ENCODE measurements at regions of chr2 and their contacts with region 1.

Region 1: DNA sequence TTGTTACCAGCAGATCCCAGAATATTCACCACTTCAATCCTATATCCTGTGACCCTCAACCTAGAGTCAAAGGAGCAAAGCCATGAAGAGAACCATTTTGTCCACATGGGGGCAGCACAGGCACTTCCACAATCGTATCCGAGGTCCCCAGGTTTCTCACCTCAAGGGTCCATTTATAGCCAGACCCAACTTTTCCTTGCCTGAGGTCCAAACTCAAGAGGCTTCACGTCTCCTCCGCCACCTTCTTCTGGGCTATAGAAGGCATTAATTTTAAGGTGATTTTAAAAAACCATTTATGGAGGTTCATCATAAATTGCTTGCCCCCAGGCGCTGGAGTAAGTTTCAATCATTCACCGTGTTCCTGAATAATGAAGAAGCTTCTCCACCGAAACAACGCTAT is 111.6 kb upstream of the NABP1 start:
- DNase-seq: peak in 5 of 10 donors; percentile 12 to 62 (median 49)
- H3K4me3 ChIP-seq: no peak overlapping the region
- H3K27ac ChIP-seq: no peak overlapping the region
- H3K27me3 ChIP-seq: no peaks in the 10 kb centered on the region
- CTCF ChIP-seq: peak; percentile 32 to 80 (median 68)

Region 2: DNA sequence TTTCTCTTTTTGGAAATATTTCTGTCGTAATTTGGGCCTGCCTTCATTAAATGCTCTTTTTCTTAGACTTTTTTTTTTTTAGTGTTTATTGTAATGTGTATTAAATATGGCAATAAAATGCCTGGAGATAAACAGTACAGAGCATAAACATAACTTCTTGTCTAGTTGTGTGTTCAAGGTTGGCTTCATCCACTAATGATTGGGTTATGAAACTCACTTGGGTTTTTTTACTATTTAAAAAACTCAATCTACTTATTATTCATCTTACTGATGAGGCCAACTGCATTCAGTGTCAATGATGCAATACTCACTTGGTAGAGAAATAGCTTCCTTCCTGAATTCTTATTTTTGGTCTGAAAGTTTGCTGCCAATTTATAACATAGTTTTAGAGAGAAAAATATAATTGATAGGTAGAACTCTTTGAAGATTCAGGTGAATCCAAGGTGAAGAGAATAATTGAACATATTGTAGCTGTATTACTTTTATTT is 32.6 kb before region 1 on chr2:
- intact Hi-C with region 1: no loop called
- DNase-seq: no peak
- H3K4me3 ChIP-seq: no peak overlapping the region
- H3K27ac ChIP-seq: no peak overlapping the region
- H3K27me3 ChIP-seq: peaks cover 0 to 5% (median 0%) of the 10 kb centered on the region in 45 donors
- CTCF ChIP-seq: no peak

Region 3: DNA sequence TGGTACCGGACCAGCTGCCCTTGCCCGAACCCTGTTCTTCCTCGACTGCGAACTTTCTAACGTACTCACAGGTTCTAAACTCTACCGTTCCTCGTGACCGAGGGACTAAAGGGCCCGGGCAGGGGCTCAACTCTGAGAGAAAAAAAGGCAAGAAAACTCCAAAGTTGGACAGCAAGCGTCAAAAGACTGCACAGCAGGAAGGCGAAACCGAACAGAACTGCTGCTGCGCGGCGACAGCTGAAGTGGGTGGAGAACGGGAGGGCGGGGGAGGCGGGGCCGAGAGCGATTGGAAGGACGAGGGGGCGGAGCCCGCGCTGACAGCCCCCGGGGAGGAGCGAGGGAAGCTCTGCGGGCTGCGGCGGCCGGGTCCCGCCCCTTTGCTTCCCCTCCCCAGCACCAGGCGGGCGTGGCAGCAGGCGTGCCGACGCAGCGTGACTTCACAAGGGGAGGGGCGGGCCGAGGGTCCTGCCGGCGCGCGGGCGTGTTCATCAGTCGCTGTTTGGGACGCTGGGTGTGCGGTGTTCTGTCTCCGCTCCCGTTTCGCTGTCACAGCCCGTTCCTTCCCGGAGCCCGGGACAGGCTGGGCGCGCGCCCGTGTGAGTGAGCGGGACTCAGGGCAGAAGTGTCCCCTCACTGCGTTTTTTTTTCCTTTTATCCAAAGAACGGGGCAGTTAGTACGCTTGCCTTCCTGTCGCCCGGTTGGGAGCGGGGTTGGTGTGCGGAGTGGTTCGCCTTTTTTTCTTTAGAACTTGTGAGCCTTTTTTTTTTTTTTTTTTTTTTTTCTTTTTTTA is 111.5 kb after region 1 on chr2 and contains the start of gene NABP1:
- intact Hi-C with region 1: loop called in 1 of 2 experiments (anchors 10 kb)
- DNase-seq: peak; percentile 86 to 98 (median 96)
- H3K4me3 ChIP-seq: peak within 1 kb of the TSS; percentile 51 to 96 (median 77)
- H3K27ac ChIP-seq: peak within 1 kb of the TSS; percentile 26 to 96 (median 89)
- H3K27me3 ChIP-seq: no peaks in the 10 kb centered on the region
- CTCF ChIP-seq: peak in 24 of 56 donors; percentile 4 to 52 (median 24)
- total RNA-seq, gene NABP1: 3.6 to 18.7 (median 7.0) TPM

Region 4: DNA sequence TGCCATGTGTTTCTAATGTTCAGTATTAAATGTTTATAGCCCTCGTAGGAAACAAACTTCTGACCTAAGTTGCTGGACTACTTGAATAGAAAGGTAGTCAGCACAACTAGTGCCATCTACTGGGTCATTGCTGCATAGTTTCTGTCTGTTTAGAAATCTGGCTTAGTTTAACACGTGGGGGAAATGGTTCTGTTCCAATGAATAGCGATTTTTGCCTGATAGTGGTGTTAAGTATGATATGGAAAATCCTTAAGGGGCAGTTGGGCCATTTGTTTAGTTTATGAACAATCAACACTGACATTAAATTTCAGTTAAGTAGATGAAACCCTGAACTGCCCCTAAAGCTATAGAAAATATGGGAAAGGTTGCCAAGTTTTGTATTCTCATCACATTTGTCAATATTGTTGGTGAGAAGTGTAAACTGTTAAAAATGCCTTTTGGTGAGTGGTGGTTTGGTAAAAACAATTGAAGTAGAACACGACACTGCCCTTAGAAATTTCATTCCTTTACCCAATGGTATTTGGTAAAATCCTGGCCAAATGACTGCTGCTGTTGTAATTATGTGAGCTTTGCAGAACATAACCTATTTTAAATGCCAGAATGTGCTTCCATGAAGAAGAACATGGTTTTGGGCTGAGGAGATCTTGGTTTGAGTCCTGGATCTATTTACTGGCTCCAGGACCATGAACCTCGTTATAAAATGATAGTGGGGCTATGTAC is 124.8 kb after region 1 on chr2:
- intact Hi-C with region 1: loop called in 1 of 2 experiments (anchors 5 kb)
- DNase-seq: no peak
- H3K4me3 ChIP-seq: no peak overlapping the region
- H3K27ac ChIP-seq: no peak overlapping the region
- H3K27me3 ChIP-seq: peaks cover 0 to 11% (median 0%) of the 10 kb centered on the region in 45 donors
- CTCF ChIP-seq: peak in 55 of 56 donors; percentile 41 to 85 (median 72)